ENCODE measurements at regions of chr22 and their contacts with region 1.

Region 1: GRCh38 chr22:18077639-18078328 is at the start of gene PEX26:
- DNase-seq: peak; percentile 85 to 96 (median 95)
- ATAC-seq: peak; percentile 99
- H3K4me3 ChIP-seq: peak within 1 kb of the TSS; percentile 96
- H3K4me3 Mint-ChIP-seq: peak within 1 kb of the TSS; percentile 94 to 100 (median 97)
- H3K27ac ChIP-seq: peak within 1 kb of the TSS; percentile 80
- H3K27ac Mint-ChIP-seq: peak within 1 kb of the TSS; percentile 93 to 99 (median 98)
- H3K4me1 ChIP-seq: peaks cover 19 to 27% of the 10 kb centered on the region in 2 donors
- H3K4me1 Mint-ChIP-seq: peaks cover 22 to 66% (median 61%) of the 10 kb centered on the region in 7 donors
- H3K27me3 ChIP-seq: no peaks in the 10 kb centered on the region
- H3K27me3 Mint-ChIP-seq: no peaks in the 10 kb centered on the region
- total RNA-seq, gene PEX26: 30.1 to 42.8 (median 35.5) TPM

Region 2: DNA sequence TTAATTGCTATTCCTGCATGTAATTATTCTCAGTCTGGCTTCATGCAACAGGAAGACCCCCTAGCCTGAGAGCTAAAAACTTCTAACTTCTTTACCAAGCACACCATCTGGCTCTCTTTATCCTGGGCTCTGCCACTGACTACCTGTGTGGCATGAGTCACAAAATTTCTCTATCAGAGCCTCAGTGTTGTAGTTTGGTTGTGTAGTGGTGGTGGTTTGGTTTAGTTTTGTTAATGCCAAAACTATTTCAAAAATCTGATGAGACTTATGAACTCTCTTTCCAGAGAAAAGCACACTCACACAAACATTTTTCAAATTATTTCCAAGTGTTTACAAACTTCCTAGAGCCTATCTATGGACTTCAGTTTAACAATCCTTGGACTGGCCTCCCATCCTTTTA is 1000.5 kb before region 1 on chr22:
- CTCF ChIA-PET with region 1: no interaction called
- POLR2A ChIA-PET with region 1: no interaction called
- intact Hi-C with region 1: loop called (anchors 2 kb)
- DNase-seq: no peak
- ATAC-seq: no peak
- H3K4me3 ChIP-seq: no peak overlapping the region
- H3K4me3 Mint-ChIP-seq: no peak overlapping the region
- H3K27ac ChIP-seq: no peak overlapping the region
- H3K27ac Mint-ChIP-seq: no peak overlapping the region
- H3K4me1 ChIP-seq: peaks cover 0 to 10% of the 10 kb centered on the region in 2 donors
- H3K4me1 Mint-ChIP-seq: peaks cover 0 to 19% (median 12%) of the 10 kb centered on the region in 7 donors
- H3K27me3 ChIP-seq: no peaks in the 10 kb centered on the region
- H3K27me3 Mint-ChIP-seq: peaks cover 0 to 38% (median 0%) of the 10 kb centered on the region in 5 donors

Region 3: GRCh38 chr22:17213976-17214375 is 863.8 kb before region 1 on chr22:
- CTCF ChIA-PET with region 1: no interaction called
- POLR2A ChIA-PET with region 1: no interaction called
- intact Hi-C with region 1: loop called in 1 of 2 experiments (anchors 5 kb)
- DNase-seq: peak; percentile 27 to 67 (median 51)
- ATAC-seq: peak; percentile 68
- H3K4me3 ChIP-seq: no peak overlapping the region
- H3K4me3 Mint-ChIP-seq: peak overlapping the region in 6 of 10 donors; percentile 6 to 89 (median 56)
- H3K27ac ChIP-seq: peak overlapping the region; percentile 44
- H3K27ac Mint-ChIP-seq: peak overlapping the region in 7 of 9 donors; percentile 67 to 100 (median 88)
- H3K4me1 ChIP-seq: peaks cover 9 to 15% of the 10 kb centered on the region in 2 donors
- H3K4me1 Mint-ChIP-seq: peaks cover 35 to 66% (median 48%) of the 10 kb centered on the region in 7 donors
- H3K27me3 ChIP-seq: no peaks in the 10 kb centered on the region
- H3K27me3 Mint-ChIP-seq: no peaks in the 10 kb centered on the region

Region 4: DNA sequence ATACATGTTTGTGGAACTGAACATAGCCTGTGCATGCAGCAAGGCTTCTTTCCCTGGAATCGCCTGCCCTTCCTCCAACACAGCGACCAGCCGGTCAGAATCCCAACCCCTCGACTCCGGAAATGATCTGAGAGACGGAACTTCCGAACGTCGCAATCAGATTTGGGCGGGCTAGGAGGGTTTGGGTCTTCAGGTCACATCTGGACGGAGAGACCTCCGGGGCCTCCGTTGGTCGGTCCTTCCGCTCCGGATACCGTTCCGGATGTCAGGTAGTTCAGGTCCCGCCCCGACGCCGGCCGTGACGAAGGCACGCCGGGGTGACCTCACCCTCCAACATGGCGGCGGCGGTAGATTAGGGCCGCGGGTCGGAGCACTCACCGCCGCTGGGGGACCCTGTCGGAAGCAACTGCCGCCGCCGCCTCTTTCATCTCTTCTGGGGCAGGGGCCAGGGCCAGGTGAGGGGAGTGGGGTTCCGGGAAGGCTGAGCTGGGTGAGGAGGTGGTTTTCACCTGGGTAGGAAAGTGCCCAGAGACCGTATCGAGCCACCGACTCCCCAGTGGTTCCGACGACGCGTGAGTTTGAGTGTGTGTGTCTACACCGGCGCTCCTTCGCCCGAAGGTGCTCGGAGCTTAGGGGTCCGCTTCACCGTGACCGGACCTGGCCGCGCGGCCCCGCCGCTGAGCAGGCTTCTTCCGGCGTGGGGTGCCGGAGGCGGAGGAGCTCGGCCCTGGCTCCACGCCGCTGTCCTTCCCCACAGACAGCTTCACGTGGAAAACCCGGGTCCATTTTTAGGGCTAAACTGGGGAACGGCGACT is 439.1 kb before region 1 on chr22 and contains the start of gene BCL2L13:
- CTCF ChIA-PET with region 1: no interaction called
- POLR2A ChIA-PET with region 1: no interaction called
- intact Hi-C with region 1: loop called (anchors 1 to 2 kb)
- DNase-seq: peak; percentile 77 to 91 (median 88)
- ATAC-seq: peak; percentile 96
- H3K4me3 ChIP-seq: peak within 1 kb of the TSS; percentile 73
- H3K4me3 Mint-ChIP-seq: peak within 1 kb of the TSS; percentile 87 to 95 (median 90)
- H3K27ac ChIP-seq: peak within 1 kb of the TSS; percentile 99
- H3K27ac Mint-ChIP-seq: peak within 1 kb of the TSS; percentile 92 to 99 (median 96)
- H3K4me1 ChIP-seq: peaks cover 12 to 18% of the 10 kb centered on the region in 2 donors
- H3K4me1 Mint-ChIP-seq: peaks cover 17 to 38% (median 34%) of the 10 kb centered on the region in 7 donors
- H3K27me3 ChIP-seq: no peaks in the 10 kb centered on the region
- H3K27me3 Mint-ChIP-seq: no peaks in the 10 kb centered on the region
- total RNA-seq, gene BCL2L13: 21.9 to 39.1 (median 32.8) TPM

Region 5: GRCh38 chr22:17773606-17774205 is 304.1 kb before region 1 on chr22:
- CTCF ChIA-PET with region 1: no interaction called
- POLR2A ChIA-PET with region 1: interaction called, 5 read pairs
- intact Hi-C with region 1: loop called (anchors 1 kb)
- DNase-seq: peak in 5 of 9 donors; percentile 39 to 76 (median 41)
- ATAC-seq: peak; percentile 40
- H3K4me3 ChIP-seq: peak overlapping the region; percentile 64
- H3K4me3 Mint-ChIP-seq: peak overlapping the region; percentile 76 to 95 (median 90)
- H3K27ac ChIP-seq: peak overlapping the region; percentile 69
- H3K27ac Mint-ChIP-seq: peak overlapping the region in 8 of 9 donors; percentile 72 to 93 (median 82)
- H3K4me1 ChIP-seq: peaks cover 46 to 63% of the 10 kb centered on the region in 2 donors
- H3K4me1 Mint-ChIP-seq: peaks cover 48 to 81% (median 61%) of the 10 kb centered on the region in 7 donors
- H3K27me3 ChIP-seq: no peaks in the 10 kb centered on the region
- H3K27me3 Mint-ChIP-seq: peaks cover 0 to 8% (median 0%) of the 10 kb centered on the region in 5 donors

Region 6: GRCh38 chr22:18001040-18001893 is 76.5 kb before region 1 on chr22:
- CTCF ChIA-PET with region 1: interaction called, 5 read pairs
- POLR2A ChIA-PET with region 1: interaction called, 6 read pairs
- intact Hi-C with region 1: loop called (anchors 1 kb)
- DNase-seq: peak in 8 of 9 donors; percentile 18 to 77 (median 49)
- ATAC-seq: peak; percentile 69
- H3K4me3 ChIP-seq: peak overlapping the region; percentile 85
- H3K4me3 Mint-ChIP-seq: peak overlapping the region; percentile 79 to 96 (median 92)
- H3K27ac ChIP-seq: peak overlapping the region; percentile 63
- H3K27ac Mint-ChIP-seq: peak overlapping the region in 8 of 9 donors; percentile 62 to 97 (median 84)
- H3K4me1 ChIP-seq: peaks cover 13 to 20% of the 10 kb centered on the region in 2 donors
- H3K4me1 Mint-ChIP-seq: peaks cover 33 to 50% (median 47%) of the 10 kb centered on the region in 7 donors
- H3K27me3 ChIP-seq: no peaks in the 10 kb centered on the region
- H3K27me3 Mint-ChIP-seq: peaks cover 0 to 27% (median 3%) of the 10 kb centered on the region in 5 donors

Region 7: DNA sequence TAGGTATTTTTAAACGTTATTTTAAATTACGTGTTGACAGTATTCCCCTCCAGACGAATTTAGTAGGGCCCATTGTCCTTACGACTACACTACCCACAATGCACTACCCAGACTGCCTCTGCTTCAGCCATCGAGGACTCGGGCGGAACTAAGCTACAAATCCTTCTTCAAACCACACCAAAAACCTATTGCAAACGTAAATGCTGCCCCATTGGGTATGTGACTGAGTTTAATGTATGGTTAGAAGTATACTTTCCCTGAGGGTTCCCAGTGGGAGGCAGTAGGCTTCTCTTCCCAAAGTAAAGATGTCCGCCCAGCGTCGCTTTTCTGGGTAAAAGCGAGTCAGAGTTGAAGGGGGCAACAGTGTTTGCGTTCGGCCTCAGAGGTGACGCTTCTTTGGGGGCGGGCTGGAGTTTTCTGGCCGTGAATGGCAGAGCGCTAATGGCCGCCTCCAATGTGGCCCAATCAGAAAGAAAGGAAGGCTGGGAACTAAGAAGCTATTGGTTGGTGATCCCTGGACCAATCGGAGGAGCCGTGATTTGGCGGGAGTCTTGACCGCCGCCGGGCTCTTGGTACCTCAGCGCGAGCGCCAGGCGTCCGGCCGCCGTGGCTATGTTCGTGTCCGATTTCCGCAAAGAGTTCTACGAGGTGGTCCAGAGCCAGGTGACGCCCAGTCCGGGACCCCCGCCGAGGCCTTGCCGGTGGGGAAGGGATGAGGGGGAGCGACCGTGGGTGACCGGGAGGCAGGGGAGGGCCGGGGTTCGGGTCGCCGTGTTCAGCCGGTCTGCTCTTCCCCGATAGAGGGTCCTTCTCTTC is 1401.8 kb after region 1 on chr22 and contains the start of gene CDC45:
- CTCF ChIA-PET with region 1: no interaction called
- POLR2A ChIA-PET with region 1: no interaction called
- intact Hi-C with region 1: loop called in 1 of 2 experiments (anchors 5 kb)
- DNase-seq: peak; percentile 75 to 96 (median 93)
- ATAC-seq: peak; percentile 94
- H3K4me3 ChIP-seq: peak within 1 kb of the TSS; percentile 85
- H3K4me3 Mint-ChIP-seq: peak within 1 kb of the TSS; percentile 87 to 98 (median 92)
- H3K27ac ChIP-seq: peak within 1 kb of the TSS; percentile 96
- H3K27ac Mint-ChIP-seq: peak within 1 kb of the TSS; percentile 98 to 100 (median 99)
- H3K4me1 ChIP-seq: peaks cover 17 to 19% of the 10 kb centered on the region in 2 donors
- H3K4me1 Mint-ChIP-seq: peaks cover 24 to 43% (median 33%) of the 10 kb centered on the region in 7 donors
- H3K27me3 ChIP-seq: no peaks in the 10 kb centered on the region
- H3K27me3 Mint-ChIP-seq: no peaks in the 10 kb centered on the region
- total RNA-seq, gene CDC45: 0.35 to 57.7 (median 0.85) TPM